B cell (primary cell): ENCODE measurements at regions of chr10 and their contacts with region 1.

Region 1: GRCh38 chr10:5684318-5684970 is at the start of gene TASOR2:
- DNase-seq: peak; percentile 95
- ATAC-seq: peak; percentile 83
- H3K4me3 ChIP-seq: peak within 1 kb of the TSS; percentile 31 to 87 (median 75)
- H3K4me3 Mint-ChIP-seq: peak within 1 kb of the TSS; percentile 98
- H3K27ac ChIP-seq: peak within 1 kb of the TSS; percentile 78 to 97
- H3K27ac Mint-ChIP-seq: peak within 1 kb of the TSS; percentile 95
- H3K4me1 ChIP-seq: peaks cover 27 to 33% of the 10 kb centered on the region in 2 donors
- H3K4me1 Mint-ChIP-seq: peaks cover 33% of the 10 kb centered on the region
- H3K27me3 ChIP-seq: no peaks in the 10 kb centered on the region
- H3K27me3 Mint-ChIP-seq: peaks cover 4% of the 10 kb centered on the region
- CTCF ChIP-seq: no peak
- total RNA-seq, gene TASOR2: 68.6 and 69.6 TPM in 2 replicates

Region 2: GRCh38 chr10:5446390-5446926 is 238.0 kb before region 1 on chr10:
- CTCF ChIA-PET with region 1: no interaction called
- POLR2A ChIA-PET with region 1: no interaction called
- intact Hi-C with region 1: loop called (anchors 2 kb)
- DNase-seq: peak; percentile 89
- ATAC-seq: peak; percentile 96
- H3K4me3 ChIP-seq: peak overlapping the region; percentile 45 to 76 (median 62)
- H3K4me3 Mint-ChIP-seq: peak overlapping the region; percentile 91
- H3K27ac ChIP-seq: peak overlapping the region; percentile 30 to 44
- H3K27ac Mint-ChIP-seq: peak overlapping the region; percentile 87
- H3K4me1 ChIP-seq: peaks cover 20 to 21% of the 10 kb centered on the region in 2 donors
- H3K4me1 Mint-ChIP-seq: peaks cover 47% of the 10 kb centered on the region
- H3K27me3 ChIP-seq: no peaks in the 10 kb centered on the region
- H3K27me3 Mint-ChIP-seq: no peaks in the 10 kb centered on the region
- CTCF ChIP-seq: no peak

Region 3: DNA sequence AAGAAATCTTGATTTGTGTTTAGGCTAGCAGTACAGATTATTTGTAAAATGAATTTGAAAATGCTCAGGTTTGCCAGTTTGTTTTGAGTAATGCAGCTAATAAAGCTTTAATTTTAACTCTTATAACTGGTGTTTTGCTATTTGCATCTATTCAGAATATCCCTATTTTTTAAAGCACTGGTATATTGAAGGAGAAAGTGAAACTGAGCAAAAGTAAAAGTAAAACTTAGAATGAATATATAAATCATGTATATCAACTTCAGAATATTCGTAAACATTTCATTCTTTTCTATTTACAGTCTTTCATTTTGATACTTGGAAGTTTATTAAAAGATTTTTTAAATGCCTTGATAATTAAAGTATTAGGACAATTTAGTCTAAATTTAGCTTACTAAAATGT is 26.4 kb after region 1 on chr10:
- CTCF ChIA-PET with region 1: no interaction called
- POLR2A ChIA-PET with region 1: no interaction called
- intact Hi-C with region 1: loop called (anchors 2 kb)
- DNase-seq: no peak
- ATAC-seq: no peak
- H3K4me3 ChIP-seq: peak overlapping the region in 3 of 5 experiments; percentile 25 to 60 (median 26)
- H3K4me3 Mint-ChIP-seq: peak overlapping the region; percentile 17
- H3K27ac ChIP-seq: peak overlapping the region in 1 of 2 donors; percentile 43
- H3K27ac Mint-ChIP-seq: no peak overlapping the region
- H3K4me1 ChIP-seq: peaks cover 4 to 27% of the 10 kb centered on the region in 2 donors
- H3K4me1 Mint-ChIP-seq: peaks cover 51% of the 10 kb centered on the region
- H3K27me3 ChIP-seq: no peaks in the 10 kb centered on the region
- H3K27me3 Mint-ChIP-seq: no peaks in the 10 kb centered on the region
- CTCF ChIP-seq: no peak

Region 4: GRCh38 chr10:5840314-5841307 is 156.2 kb after region 1 on chr10:
- CTCF ChIA-PET with region 1: no interaction called
- POLR2A ChIA-PET with region 1: no interaction called
- intact Hi-C with region 1: loop called (anchors 1 kb)
- DNase-seq: peak; percentile 92
- ATAC-seq: peak; percentile 82
- H3K4me3 ChIP-seq: peak overlapping the region in 4 of 5 experiments; percentile 55 to 63 (median 58)
- H3K4me3 Mint-ChIP-seq: peak overlapping the region; percentile 94
- H3K27ac ChIP-seq: peak overlapping the region; percentile 99 to 100
- H3K27ac Mint-ChIP-seq: peak overlapping the region; percentile 100
- H3K4me1 ChIP-seq: peaks cover 68 to 77% of the 10 kb centered on the region in 2 donors
- H3K4me1 Mint-ChIP-seq: peaks cover 70% of the 10 kb centered on the region
- H3K27me3 ChIP-seq: no peaks in the 10 kb centered on the region
- H3K27me3 Mint-ChIP-seq: no peaks in the 10 kb centered on the region
- CTCF ChIP-seq: no peak

Region 5: DNA sequence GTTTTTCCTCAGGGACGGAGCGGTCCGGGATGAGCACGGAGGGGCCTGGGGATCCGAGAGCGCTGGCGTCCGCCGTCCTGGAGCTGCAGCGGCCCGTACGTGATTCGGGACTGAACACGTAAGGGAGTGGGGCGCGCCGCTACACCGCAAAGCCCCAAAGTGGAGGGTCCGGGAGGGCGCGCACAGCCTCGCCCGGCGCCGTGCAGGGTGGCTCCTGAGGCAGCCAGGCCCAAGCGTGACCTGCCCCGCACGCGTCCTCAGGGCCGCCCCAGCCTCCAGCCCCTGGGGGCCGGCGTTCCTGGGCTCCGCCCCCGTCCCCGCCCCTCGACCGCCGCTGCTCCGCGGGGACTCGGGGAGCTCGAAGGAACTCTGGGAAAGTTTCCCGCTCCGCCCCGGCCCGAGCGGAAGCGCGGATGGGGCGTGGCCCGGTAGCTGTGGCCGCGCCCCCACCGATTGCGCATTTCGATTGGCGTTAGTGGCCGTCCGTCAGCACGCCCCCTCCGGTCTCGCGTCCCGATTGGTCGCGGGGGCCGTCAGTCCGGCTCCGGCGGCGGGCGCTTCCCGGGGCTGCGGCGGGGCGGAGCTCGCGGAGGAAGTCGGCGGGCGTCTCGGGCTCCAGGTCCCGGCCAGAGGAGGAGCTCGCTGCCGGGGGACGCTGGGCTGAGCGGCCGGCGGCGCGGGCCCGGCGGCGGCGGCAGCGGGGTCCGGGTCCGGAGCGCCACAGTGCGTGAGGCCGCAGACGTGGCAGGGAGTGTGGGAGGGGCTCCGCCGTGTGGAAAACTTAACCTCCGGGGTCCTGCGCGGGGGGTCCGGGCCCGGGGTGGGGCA is 205.4 kb after region 1 on chr10 and contains the starts of genes ANKRD16 and FBH1:
- CTCF ChIA-PET with region 1: interaction called, 3 read pairs
- POLR2A ChIA-PET with region 1: interaction called, 4 read pairs
- intact Hi-C with region 1: loop called (anchors 2 kb)
- DNase-seq: peak; percentile 99
- ATAC-seq: peak; percentile 84
- H3K4me3 ChIP-seq: peak within 1 kb of the TSS; percentile 51 to 88 (median 77)
- H3K4me3 Mint-ChIP-seq: peak within 1 kb of the TSS; percentile 94
- H3K27ac ChIP-seq: peak within 1 kb of the TSS; percentile 48 to 77
- H3K27ac Mint-ChIP-seq: peak within 1 kb of the TSS; percentile 88
- H3K4me1 ChIP-seq: peaks cover 28 to 33% of the 10 kb centered on the region in 2 donors
- H3K4me1 Mint-ChIP-seq: peaks cover 58% of the 10 kb centered on the region
- H3K27me3 ChIP-seq: no peaks in the 10 kb centered on the region
- H3K27me3 Mint-ChIP-seq: no peaks in the 10 kb centered on the region
- CTCF ChIP-seq: no peak
- total RNA-seq, gene ANKRD16: 12.6 and 13.1 TPM in 2 replicates
- total RNA-seq, gene FBH1: 129 and 138 TPM in 2 replicates

Region 6: DNA sequence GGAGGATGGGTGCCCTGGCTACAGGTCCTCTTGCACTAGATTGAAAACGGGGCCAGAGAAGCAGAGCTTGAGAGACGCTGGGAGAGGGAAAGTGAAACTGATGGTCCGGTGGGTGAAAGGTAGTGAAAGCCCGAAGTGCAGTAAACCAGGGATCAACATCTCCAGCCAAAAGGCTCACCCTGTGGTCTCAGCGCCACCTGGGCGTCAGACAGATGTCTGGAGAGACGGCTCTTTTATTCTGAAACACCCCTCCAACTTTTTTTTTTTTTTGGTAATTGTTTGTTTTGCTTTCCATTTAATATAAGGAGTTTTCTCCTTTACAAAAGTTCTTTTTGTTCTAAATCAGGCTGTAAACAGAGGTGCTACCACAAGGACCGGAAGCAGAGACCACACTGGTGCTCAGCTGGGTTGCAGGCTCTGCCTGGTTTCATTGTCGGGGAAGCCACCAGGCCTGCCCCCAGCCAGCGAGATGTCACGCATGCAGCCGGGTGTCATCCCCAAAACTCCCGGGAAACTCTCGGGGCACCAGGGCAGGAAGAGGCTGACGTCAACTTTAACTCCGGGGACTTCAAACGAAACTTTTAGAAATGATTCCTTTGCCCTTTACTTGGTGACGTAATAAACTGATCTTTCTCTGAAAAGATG is 366.5 kb after region 1 on chr10:
- CTCF ChIA-PET with region 1: no interaction called
- POLR2A ChIA-PET with region 1: no interaction called
- intact Hi-C with region 1: loop called (anchors 1 kb)
- DNase-seq: peak; percentile 96
- ATAC-seq: peak; percentile 66
- H3K4me3 ChIP-seq: peak overlapping the region; percentile 35 to 63 (median 55)
- H3K4me3 Mint-ChIP-seq: peak overlapping the region; percentile 91
- H3K27ac ChIP-seq: peak overlapping the region; percentile 92
- H3K27ac Mint-ChIP-seq: peak overlapping the region; percentile 99
- H3K4me1 ChIP-seq: peaks cover 69 to 82% of the 10 kb centered on the region in 2 donors
- H3K4me1 Mint-ChIP-seq: peaks cover 87% of the 10 kb centered on the region
- H3K27me3 ChIP-seq: no peaks in the 10 kb centered on the region
- H3K27me3 Mint-ChIP-seq: no peaks in the 10 kb centered on the region
- CTCF ChIP-seq: peak; percentile 35

Region 7: DNA sequence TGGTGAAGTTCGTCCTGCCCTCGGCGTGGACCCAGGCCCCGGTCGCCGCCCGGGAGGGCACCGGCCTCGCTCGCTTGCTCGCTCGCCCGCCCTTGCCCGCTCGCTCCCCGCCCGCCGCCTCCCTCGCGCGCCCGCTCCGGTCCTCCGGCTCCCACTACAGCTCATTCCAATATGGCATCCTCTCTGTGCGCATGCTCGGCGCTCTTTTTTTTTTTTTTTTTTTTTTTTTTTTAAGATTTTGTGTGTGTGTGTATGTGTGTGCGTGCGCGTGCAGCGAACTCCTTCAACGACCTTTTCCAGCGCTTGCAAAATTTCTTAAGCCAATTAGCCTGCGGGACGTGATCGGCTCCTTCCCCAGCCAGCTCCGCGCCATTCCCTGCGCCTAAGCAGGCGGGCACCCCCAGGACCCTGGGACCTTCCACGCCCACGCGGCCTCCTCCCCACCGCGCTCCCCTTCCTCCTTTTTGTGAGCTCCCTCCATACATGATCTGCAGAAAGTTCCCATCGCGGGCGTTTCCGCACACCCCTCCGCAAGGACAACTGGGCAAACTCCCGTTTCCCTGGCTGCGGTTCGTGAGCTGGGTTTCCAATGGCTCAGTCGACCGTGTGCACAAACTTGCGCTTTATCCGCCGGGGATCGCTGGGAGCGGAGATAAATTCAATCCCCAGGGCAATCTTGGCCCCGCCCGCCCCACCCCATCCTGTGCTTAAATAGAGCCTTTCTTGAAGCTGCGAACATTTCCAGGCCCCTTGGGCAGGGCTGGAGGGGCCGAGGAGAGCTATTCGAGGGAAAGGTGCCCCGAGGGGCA is 1726.6 kb after region 1 on chr10 and contains the start of gene SFMBT2:
- CTCF ChIA-PET with region 1: no interaction called
- POLR2A ChIA-PET with region 1: no interaction called
- intact Hi-C with region 1: loop called (anchors 5 kb)
- DNase-seq: peak; percentile 79
- ATAC-seq: peak; percentile 67
- H3K4me3 ChIP-seq: peak within 1 kb of the TSS; percentile 58 to 85 (median 75)
- H3K4me3 Mint-ChIP-seq: peak within 1 kb of the TSS; percentile 93
- H3K27ac ChIP-seq: no peak within 1 kb of the TSS
- H3K27ac Mint-ChIP-seq: peak within 1 kb of the TSS; percentile 83
- H3K4me1 ChIP-seq: peaks cover 20 to 35% of the 10 kb centered on the region in 2 donors
- H3K4me1 Mint-ChIP-seq: peaks cover 43% of the 10 kb centered on the region
- H3K27me3 ChIP-seq: peaks cover 0 to 21% (median 11%) of the 10 kb centered on the region in 4 experiments
- H3K27me3 Mint-ChIP-seq: peaks cover 10% of the 10 kb centered on the region
- CTCF ChIP-seq: no peak
- total RNA-seq, gene SFMBT2: 24.0 and 26.5 TPM in 2 replicates